Ascending aorta (tissue), 2 donors: ENCODE measurements at regions of chr1 and their contacts with region 1.

Region 1: GRCh38 chr1:23916209-23917131 is 3.3 kb upstream of the CNR2 start:
- DNase-seq: peak; percentile 15 to 78
- H3K4me3 ChIP-seq: no peak overlapping the region
- H3K27ac ChIP-seq: no peak overlapping the region
- H3K4me1 ChIP-seq: peaks cover 0 to 17% of the 10 kb centered on the region in 2 donors
- H3K27me3 ChIP-seq: no peaks in the 10 kb centered on the region
- CTCF ChIP-seq: peak; percentile 30 to 69 (median 61)

Region 2: GRCh38 chr1:23772049-23772853 is 144.2 kb before region 1 on chr1:
- intact Hi-C with region 1: loop called (anchors 2 kb)
- DNase-seq: peak; percentile 43 to 92
- H3K4me3 ChIP-seq: peak overlapping the region in 1 of 2 donors; percentile 23
- H3K27ac ChIP-seq: no peak overlapping the region
- H3K4me1 ChIP-seq: peaks cover under 1 to 2% of the 10 kb centered on the region in 2 donors
- H3K27me3 ChIP-seq: no peaks in the 10 kb centered on the region
- CTCF ChIP-seq: peak; percentile 80 to 97 (median 95)

Region 3: DNA sequence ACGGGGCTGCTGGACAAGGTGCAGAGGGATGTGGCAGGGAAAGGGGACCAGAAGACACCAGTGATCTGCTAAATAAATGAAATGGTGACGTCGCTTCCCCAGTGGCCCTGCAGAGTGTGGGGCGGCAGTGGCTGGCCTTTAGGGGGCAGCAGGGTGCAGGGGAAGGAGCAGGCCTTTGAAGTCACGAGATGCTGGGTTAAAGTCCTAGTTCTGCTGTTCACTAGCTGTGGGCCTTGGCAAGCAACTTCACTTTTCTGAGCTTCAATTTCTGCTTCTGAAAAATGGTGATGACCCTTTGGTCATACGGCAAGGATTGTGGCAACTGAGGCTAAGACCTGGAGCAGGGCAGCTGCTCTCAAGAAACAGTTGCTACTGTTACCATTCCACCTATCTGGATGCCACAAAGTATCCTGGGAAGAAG is 106.7 kb before region 1 on chr1:
- intact Hi-C with region 1: loop called (anchors 10 kb)
- DNase-seq: no peak
- H3K4me3 ChIP-seq: no peak overlapping the region
- H3K27ac ChIP-seq: no peak overlapping the region
- H3K4me1 ChIP-seq: no peaks in the 10 kb centered on the region
- H3K27me3 ChIP-seq: no peaks in the 10 kb centered on the region
- CTCF ChIP-seq: peak; percentile 50 to 63 (median 51)

Region 4: DNA sequence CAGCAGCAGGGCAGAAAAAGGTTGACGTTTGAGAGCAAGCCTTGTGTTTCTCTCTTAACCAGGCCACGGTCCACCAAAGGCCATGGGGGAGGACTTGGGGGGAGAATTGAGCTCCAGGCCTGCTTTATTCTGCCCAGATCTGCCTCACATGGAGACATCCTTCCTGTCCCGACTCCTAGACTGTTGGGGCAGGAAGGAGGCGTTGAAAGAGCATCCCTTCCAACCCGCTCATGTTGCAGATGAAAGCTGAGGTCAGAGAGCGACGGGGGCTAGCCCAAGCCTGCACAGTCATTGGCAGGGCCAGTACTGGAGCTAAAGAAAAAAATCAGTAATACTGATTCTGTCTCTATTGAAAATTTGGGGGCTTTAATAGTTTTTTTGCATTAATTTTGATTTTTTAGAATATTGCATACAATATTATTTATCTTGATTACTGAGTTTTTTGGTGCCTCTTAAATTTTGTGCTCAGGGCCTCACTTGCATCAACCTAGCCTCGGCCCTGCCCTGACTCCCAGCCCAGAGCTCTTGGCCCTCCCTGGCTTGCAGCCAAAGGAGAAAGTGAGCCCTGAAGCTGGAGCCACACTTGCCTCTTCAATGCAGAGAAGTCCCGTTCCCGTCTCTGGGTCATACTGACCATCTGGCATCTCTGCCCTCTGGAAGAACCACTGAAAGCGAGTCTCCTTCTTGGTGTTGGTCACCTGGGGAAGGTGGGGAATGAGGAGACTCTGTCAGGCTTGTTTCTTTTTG is 149.0 kb after region 1 on chr1:
- intact Hi-C with region 1: no loop called
- DNase-seq: no peak
- H3K4me3 ChIP-seq: no peak overlapping the region
- H3K27ac ChIP-seq: no peak overlapping the region
- H3K4me1 ChIP-seq: no peaks in the 10 kb centered on the region
- H3K27me3 ChIP-seq: no peaks in the 10 kb centered on the region
- CTCF ChIP-seq: no peak